ENCODE measurements at regions of chr18 and their contacts with region 1.

Region 1: DNA sequence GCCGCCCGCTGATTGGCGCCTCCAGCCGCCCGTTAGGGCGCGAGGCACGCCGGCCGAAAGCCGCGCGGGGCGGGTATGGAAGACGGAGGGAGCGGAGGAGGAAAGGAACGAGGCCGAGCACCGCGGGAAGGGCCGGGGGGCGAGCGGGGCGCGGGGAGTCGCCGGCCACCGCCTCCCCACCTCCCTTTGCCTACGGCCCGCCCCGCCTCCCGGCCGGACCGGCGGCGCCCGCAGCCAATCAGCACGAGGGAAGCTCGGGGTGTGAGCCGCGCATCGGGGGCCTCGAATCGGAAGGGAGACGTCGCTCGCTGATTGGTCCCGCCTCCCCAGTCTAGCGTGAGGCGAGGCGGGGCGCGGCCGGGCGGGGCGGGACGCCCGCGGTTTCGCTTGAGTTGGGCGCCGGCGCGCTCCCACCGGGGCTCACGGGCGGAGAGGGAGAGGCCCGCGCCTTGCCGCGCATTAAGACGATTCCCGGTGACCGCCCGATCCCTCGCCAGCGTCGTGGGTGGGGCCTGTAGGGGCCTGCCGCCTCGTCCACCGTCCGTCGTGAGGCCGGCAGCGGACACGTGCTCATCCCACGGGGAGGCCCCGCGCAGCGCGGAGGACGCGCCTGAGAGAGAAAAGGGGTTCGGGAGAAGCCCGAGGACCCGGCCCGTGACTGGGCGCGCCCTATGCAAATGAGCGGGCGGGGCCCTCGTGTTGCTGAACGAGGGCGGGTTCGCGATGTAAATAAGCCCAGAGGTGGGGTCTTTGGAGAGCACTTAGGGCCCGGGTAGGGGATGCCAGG is 665 bp upstream of the SMAD2 start:
- H3K4me3 Mint-ChIP-seq: peak overlapping the region; percentile 81
- H3K27ac Mint-ChIP-seq: peak overlapping the region; percentile 93
- H3K4me1 Mint-ChIP-seq: peaks cover 42% of the 10 kb centered on the region
- H3K27me3 Mint-ChIP-seq: no peaks in the 10 kb centered on the region

Region 2: GRCh38 chr18:47917923-47918610 is 13.1 kb before region 1 on chr18:
- intact Hi-C with region 1: no loop called
- H3K4me3 Mint-ChIP-seq: no peak overlapping the region
- H3K27ac Mint-ChIP-seq: no peak overlapping the region
- H3K4me1 Mint-ChIP-seq: peaks cover 52% of the 10 kb centered on the region
- H3K27me3 Mint-ChIP-seq: no peaks in the 10 kb centered on the region

Region 3: DNA sequence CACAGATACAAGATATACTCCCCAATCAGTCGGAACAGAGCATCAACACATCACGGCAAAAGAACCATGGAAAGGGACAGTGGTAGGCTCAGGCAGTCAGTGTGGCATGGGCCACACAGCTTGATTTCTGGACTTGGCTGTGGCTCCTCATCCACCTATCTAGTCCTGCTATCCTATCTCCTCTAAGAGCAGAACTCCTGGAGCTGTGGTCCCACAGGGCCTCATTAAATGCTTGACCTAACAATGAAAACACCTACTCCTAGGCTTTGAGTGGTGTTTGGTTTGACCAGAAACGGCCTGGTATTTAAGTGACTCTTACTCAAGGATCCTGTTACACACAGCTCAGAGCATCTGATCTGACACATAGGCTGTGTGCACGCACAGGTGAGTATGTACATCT is 32.9 kb after region 1 on chr18:
- intact Hi-C with region 1: no loop called
- H3K4me3 Mint-ChIP-seq: no peak overlapping the region
- H3K27ac Mint-ChIP-seq: no peak overlapping the region
- H3K4me1 Mint-ChIP-seq: no peaks in the 10 kb centered on the region
- H3K27me3 Mint-ChIP-seq: no peaks in the 10 kb centered on the region

Region 4: GRCh38 chr18:47986620-47987387 is 55.7 kb after region 1 on chr18:
- intact Hi-C with region 1: loop called (anchors 5 kb)
- H3K4me3 Mint-ChIP-seq: no peak overlapping the region
- H3K27ac Mint-ChIP-seq: no peak overlapping the region
- H3K4me1 Mint-ChIP-seq: peaks cover 44% of the 10 kb centered on the region
- H3K27me3 Mint-ChIP-seq: no peaks in the 10 kb centered on the region

Region 5: DNA sequence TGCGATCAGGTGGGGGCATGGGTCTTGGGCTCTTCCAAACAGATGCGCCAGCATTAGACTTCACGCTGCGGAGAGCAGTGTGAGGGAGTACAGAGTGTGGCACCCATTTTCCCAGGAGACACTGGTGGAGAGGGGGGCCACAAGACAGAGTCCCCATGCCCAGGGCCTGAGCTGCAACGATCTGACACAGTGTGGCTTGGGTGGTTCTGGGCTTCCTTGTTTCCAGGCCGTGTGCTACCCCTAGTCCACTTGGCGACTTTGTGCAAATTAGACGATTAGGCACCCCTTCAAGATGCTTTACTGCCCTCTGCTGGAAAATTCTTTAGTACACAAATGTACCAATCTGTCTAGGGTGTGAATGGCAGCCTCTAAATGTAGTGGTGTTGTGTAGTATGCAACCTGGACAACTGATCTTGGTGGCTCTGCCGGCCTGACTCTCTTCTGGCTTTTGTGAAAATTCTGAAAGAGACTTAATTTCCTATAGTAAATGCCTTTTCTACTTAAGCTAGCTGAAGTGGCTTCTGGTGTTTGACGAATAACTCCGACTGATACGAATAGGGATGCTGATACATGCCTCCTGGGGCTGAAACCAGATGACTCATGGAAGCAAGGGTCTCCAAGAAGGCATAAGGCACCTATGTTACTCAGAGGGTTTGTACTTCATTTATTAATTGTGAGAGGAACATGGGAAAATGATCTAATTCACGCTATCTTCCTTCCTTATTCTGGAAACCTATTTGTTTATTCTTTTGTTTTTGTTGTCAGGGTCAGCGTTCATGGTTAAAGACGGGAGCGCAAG is 91.6 kb after region 1 on chr18:
- intact Hi-C with region 1: loop called (anchors 1 kb)
- H3K4me3 Mint-ChIP-seq: no peak overlapping the region
- H3K27ac Mint-ChIP-seq: no peak overlapping the region
- H3K4me1 Mint-ChIP-seq: peaks cover 38% of the 10 kb centered on the region
- H3K27me3 Mint-ChIP-seq: peaks cover 34% of the 10 kb centered on the region